Naive thymus-derived CD4-positive, alpha-beta T cell (primary cell): ENCODE measurements at regions of chr10 and their contacts with region 1.

Region 1: DNA sequence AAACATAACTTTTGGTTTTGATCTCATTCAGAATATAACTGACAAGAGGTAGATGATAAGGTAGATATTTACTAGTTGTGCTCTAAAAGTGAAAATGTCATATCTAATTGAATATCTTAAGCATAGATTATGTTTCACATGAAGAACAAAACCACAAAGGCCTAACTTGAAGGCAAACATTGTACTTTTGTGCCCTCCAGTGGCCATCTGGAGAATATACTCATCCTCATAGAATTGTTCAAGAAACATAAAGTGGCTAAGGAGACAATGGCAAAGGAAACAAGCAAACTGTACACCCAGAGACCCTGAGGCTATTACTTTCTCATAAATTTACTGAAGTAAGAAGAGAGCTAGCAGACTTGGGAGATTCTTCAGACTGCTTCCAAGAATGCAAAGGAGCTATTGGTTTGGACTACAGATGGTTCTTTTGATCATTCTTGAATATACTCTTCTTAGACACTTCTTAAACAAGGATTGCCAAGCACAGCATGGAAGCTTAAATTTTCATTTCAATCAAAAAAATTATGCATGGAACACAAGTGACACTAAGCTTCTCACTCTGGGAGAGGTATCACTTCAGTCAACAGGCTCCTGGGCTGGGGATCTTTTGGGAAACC is 98.2 kb upstream of the DKK1 start:
- DNase-seq: peak in 7 of 9 donors; percentile 17 to 58 (median 41)
- ATAC-seq: peak; percentile 74
- H3K4me3 ChIP-seq: no peak overlapping the region
- H3K4me3 Mint-ChIP-seq: no peak overlapping the region
- H3K27ac ChIP-seq: no peak overlapping the region
- H3K27ac Mint-ChIP-seq: peak overlapping the region in 1 of 9 donors; percentile 12
- H3K4me1 ChIP-seq: no peaks in the 10 kb centered on the region
- H3K4me1 Mint-ChIP-seq: no peaks in the 10 kb centered on the region
- H3K27me3 ChIP-seq: no peaks in the 10 kb centered on the region
- H3K27me3 Mint-ChIP-seq: no peaks in the 10 kb centered on the region

Region 2: GRCh38 chr10:51001587-51001986 is 1214.3 kb before region 1 on chr10:
- CTCF ChIA-PET with region 1: interaction called, 6 read pairs
- POLR2A ChIA-PET with region 1: no interaction called
- intact Hi-C with region 1: loop called (anchors 1 kb)
- DNase-seq: peak in 4 of 9 donors; percentile 4 to 12 (median 6)
- ATAC-seq: no peak
- H3K4me3 ChIP-seq: no peak overlapping the region
- H3K4me3 Mint-ChIP-seq: no peak overlapping the region
- H3K27ac ChIP-seq: no peak overlapping the region
- H3K27ac Mint-ChIP-seq: no peak overlapping the region
- H3K4me1 ChIP-seq: no peaks in the 10 kb centered on the region
- H3K4me1 Mint-ChIP-seq: no peaks in the 10 kb centered on the region
- H3K27me3 ChIP-seq: no peaks in the 10 kb centered on the region
- H3K27me3 Mint-ChIP-seq: peaks cover 7 to 16% (median 11%) of the 10 kb centered on the region in 5 donors

Region 3: DNA sequence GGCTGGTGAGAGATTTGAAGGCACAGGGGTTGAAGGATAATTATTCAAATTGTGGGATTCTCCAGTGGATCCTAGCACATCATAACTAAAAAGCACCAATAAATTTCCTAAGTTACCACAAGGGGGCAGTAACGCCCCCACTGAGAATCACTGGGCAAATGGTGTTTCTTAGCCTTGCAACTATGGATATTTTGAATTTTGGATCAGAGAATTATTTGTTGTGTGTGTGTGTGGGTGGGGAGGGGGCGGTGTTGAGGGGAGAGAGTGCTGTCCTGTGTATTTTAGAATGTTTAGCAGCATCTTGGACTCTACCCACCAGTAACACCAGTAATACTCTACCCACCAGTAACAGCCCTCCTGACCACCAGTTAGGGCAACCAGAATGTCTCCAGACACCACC is 1204.9 kb before region 1 on chr10:
- CTCF ChIA-PET with region 1: no interaction called
- POLR2A ChIA-PET with region 1: no interaction called
- intact Hi-C with region 1: loop called in 1 of 2 experiments (anchors 1 kb)
- DNase-seq: peak in 3 of 9 donors; percentile 9 to 15 (median 11)
- ATAC-seq: no peak
- H3K4me3 ChIP-seq: no peak overlapping the region
- H3K4me3 Mint-ChIP-seq: no peak overlapping the region
- H3K27ac ChIP-seq: no peak overlapping the region
- H3K27ac Mint-ChIP-seq: no peak overlapping the region
- H3K4me1 ChIP-seq: no peaks in the 10 kb centered on the region
- H3K4me1 Mint-ChIP-seq: no peaks in the 10 kb centered on the region
- H3K27me3 ChIP-seq: no peaks in the 10 kb centered on the region
- H3K27me3 Mint-ChIP-seq: peaks cover 5 to 20% (median 9%) of the 10 kb centered on the region in 5 donors

Region 4: GRCh38 chr10:51063659-51064535 is 1152.0 kb before region 1 on chr10:
- CTCF ChIA-PET with region 1: no interaction called
- POLR2A ChIA-PET with region 1: no interaction called
- intact Hi-C with region 1: loop called in 1 of 2 experiments (anchors 5 kb)
- DNase-seq: no peak
- ATAC-seq: no peak
- H3K4me3 ChIP-seq: no peak overlapping the region
- H3K4me3 Mint-ChIP-seq: no peak overlapping the region
- H3K27ac ChIP-seq: no peak overlapping the region
- H3K27ac Mint-ChIP-seq: no peak overlapping the region
- H3K4me1 ChIP-seq: no peaks in the 10 kb centered on the region
- H3K4me1 Mint-ChIP-seq: peaks cover 0 to 1% (median 0%) of the 10 kb centered on the region in 7 donors
- H3K27me3 ChIP-seq: no peaks in the 10 kb centered on the region
- H3K27me3 Mint-ChIP-seq: peaks cover 0 to 8% (median 2%) of the 10 kb centered on the region in 5 donors

Region 5: GRCh38 chr10:51389415-51390321 is 826.2 kb before region 1 on chr10:
- CTCF ChIA-PET with region 1: interaction called, 5 read pairs
- POLR2A ChIA-PET with region 1: no interaction called
- intact Hi-C with region 1: loop called in 1 of 2 experiments (anchors 1 kb)
- DNase-seq: peak in 6 of 9 donors; percentile 1 to 38 (median 10)
- ATAC-seq: no peak
- H3K4me3 ChIP-seq: no peak overlapping the region
- H3K4me3 Mint-ChIP-seq: no peak overlapping the region
- H3K27ac ChIP-seq: no peak overlapping the region
- H3K27ac Mint-ChIP-seq: no peak overlapping the region
- H3K4me1 ChIP-seq: no peaks in the 10 kb centered on the region
- H3K4me1 Mint-ChIP-seq: no peaks in the 10 kb centered on the region
- H3K27me3 ChIP-seq: no peaks in the 10 kb centered on the region
- H3K27me3 Mint-ChIP-seq: peaks cover 0 to 1% (median 0%) of the 10 kb centered on the region in 5 donors

Region 6: GRCh38 chr10:51950371-51950995 is 265.4 kb before region 1 on chr10:
- CTCF ChIA-PET with region 1: no interaction called
- POLR2A ChIA-PET with region 1: no interaction called
- intact Hi-C with region 1: loop called in 1 of 2 experiments (anchors 10 kb)
- DNase-seq: no peak
- ATAC-seq: no peak
- H3K4me3 ChIP-seq: no peak overlapping the region
- H3K4me3 Mint-ChIP-seq: no peak overlapping the region
- H3K27ac ChIP-seq: no peak overlapping the region
- H3K27ac Mint-ChIP-seq: no peak overlapping the region
- H3K4me1 ChIP-seq: no peaks in the 10 kb centered on the region
- H3K4me1 Mint-ChIP-seq: no peaks in the 10 kb centered on the region
- H3K27me3 ChIP-seq: no peaks in the 10 kb centered on the region
- H3K27me3 Mint-ChIP-seq: peaks cover 0 to 10% (median 4%) of the 10 kb centered on the region in 5 donors

Region 7: GRCh38 chr10:51960494-51960895 is 255.4 kb before region 1 on chr10:
- CTCF ChIA-PET with region 1: interaction called, 3 read pairs
- POLR2A ChIA-PET with region 1: no interaction called
- intact Hi-C with region 1: loop called (anchors 1 to 10 kb)
- DNase-seq: peak in 6 of 9 donors; percentile 0 to 34 (median 19)
- ATAC-seq: no peak
- H3K4me3 ChIP-seq: no peak overlapping the region
- H3K4me3 Mint-ChIP-seq: no peak overlapping the region
- H3K27ac ChIP-seq: no peak overlapping the region
- H3K27ac Mint-ChIP-seq: no peak overlapping the region
- H3K4me1 ChIP-seq: no peaks in the 10 kb centered on the region
- H3K4me1 Mint-ChIP-seq: no peaks in the 10 kb centered on the region
- H3K27me3 ChIP-seq: no peaks in the 10 kb centered on the region
- H3K27me3 Mint-ChIP-seq: peaks cover 8 to 34% (median 21%) of the 10 kb centered on the region in 5 donors

Region 8: DNA sequence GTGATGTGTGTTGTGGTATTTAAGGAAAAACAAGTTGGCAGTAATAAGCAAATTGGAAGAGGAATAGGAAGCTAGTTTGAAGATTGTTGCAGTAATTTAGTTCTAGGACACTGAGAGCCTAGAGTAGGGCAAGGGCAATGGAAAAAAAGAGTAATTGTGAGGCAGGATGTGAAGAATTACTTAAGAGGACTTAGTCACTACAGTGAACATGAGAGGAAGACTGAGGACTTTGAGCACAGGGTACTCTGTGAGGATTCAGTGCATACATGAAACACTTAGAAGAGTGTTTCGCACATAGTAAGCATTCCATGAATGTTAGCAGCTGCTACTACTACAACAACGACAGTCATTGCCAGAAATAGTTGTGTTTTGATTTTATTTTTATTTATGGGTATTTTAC is 67.3 kb after region 1 on chr10:
- CTCF ChIA-PET with region 1: no interaction called
- POLR2A ChIA-PET with region 1: no interaction called
- intact Hi-C with region 1: no loop called
- DNase-seq: no peak
- ATAC-seq: no peak
- H3K4me3 ChIP-seq: no peak overlapping the region
- H3K4me3 Mint-ChIP-seq: no peak overlapping the region
- H3K27ac ChIP-seq: no peak overlapping the region
- H3K27ac Mint-ChIP-seq: no peak overlapping the region
- H3K4me1 ChIP-seq: no peaks in the 10 kb centered on the region
- H3K4me1 Mint-ChIP-seq: no peaks in the 10 kb centered on the region
- H3K27me3 ChIP-seq: no peaks in the 10 kb centered on the region
- H3K27me3 Mint-ChIP-seq: peaks cover 0 to 5% (median 0%) of the 10 kb centered on the region in 5 donors

Region 9: GRCh38 chr10:52895059-52895458 is 679.2 kb after region 1 on chr10:
- CTCF ChIA-PET with region 1: no interaction called
- POLR2A ChIA-PET with region 1: no interaction called
- intact Hi-C with region 1: no loop called
- DNase-seq: no peak
- ATAC-seq: no peak
- H3K4me3 ChIP-seq: no peak overlapping the region
- H3K4me3 Mint-ChIP-seq: no peak overlapping the region
- H3K27ac ChIP-seq: no peak overlapping the region
- H3K27ac Mint-ChIP-seq: no peak overlapping the region
- H3K4me1 ChIP-seq: no peaks in the 10 kb centered on the region
- H3K4me1 Mint-ChIP-seq: no peaks in the 10 kb centered on the region
- H3K27me3 ChIP-seq: no peaks in the 10 kb centered on the region
- H3K27me3 Mint-ChIP-seq: no peaks in the 10 kb centered on the region